T-cell (primary cell): ENCODE measurements at regions of chr1 and their contacts with region 1.

Region 1: GRCh38 chr1:156860113-156860627 is 495 bp upstream of the NTRK1 start:
- DNase-seq: peak in 31 of 35 experiments; percentile 17 to 73 (median 37)
- ATAC-seq: peak; percentile 69 to 74 (median 70)
- H3K4me3 ChIP-seq: peak overlapping the region; percentile 38 to 71
- H3K4me3 Mint-ChIP-seq: peak overlapping the region; percentile 69 to 90 (median 75)
- H3K27ac ChIP-seq: no peak overlapping the region
- H3K27ac Mint-ChIP-seq: no peak overlapping the region
- H3K4me1 ChIP-seq: peaks cover 5 to 30% of the 10 kb centered on the region in 2 experiments
- H3K4me1 Mint-ChIP-seq: peaks cover 18 to 32% (median 30%) of the 10 kb centered on the region in 3 donors
- H3K27me3 ChIP-seq: peaks cover 13 to 86% of the 10 kb centered on the region in 2 experiments
- H3K27me3 Mint-ChIP-seq: peaks cover 50 to 70% of the 10 kb centered on the region in 2 donors

Region 2: GRCh38 chr1:156689035-156689952 is 170.9 kb before region 1 on chr1:
- CTCF ChIA-PET with region 1: interaction called, 3 to 10 read pairs
- POLR2A ChIA-PET with region 1: no interaction called
- DNase-seq: peak; percentile 43 to 84 (median 70)
- ATAC-seq: peak; percentile 94 to 96 (median 96)
- H3K4me3 ChIP-seq: no peak overlapping the region
- H3K4me3 Mint-ChIP-seq: peak overlapping the region in 1 of 3 donors; percentile 25
- H3K27ac ChIP-seq: no peak overlapping the region
- H3K27ac Mint-ChIP-seq: peak overlapping the region in 1 of 2 donors; percentile 12
- H3K4me1 ChIP-seq: peaks cover 18 to 32% of the 10 kb centered on the region in 2 experiments
- H3K4me1 Mint-ChIP-seq: peaks cover 23 to 33% (median 26%) of the 10 kb centered on the region in 3 donors
- H3K27me3 ChIP-seq: peaks cover 5 to 84% of the 10 kb centered on the region in 2 experiments
- H3K27me3 Mint-ChIP-seq: peaks cover 41 to 61% of the 10 kb centered on the region in 2 donors

Region 3: DNA sequence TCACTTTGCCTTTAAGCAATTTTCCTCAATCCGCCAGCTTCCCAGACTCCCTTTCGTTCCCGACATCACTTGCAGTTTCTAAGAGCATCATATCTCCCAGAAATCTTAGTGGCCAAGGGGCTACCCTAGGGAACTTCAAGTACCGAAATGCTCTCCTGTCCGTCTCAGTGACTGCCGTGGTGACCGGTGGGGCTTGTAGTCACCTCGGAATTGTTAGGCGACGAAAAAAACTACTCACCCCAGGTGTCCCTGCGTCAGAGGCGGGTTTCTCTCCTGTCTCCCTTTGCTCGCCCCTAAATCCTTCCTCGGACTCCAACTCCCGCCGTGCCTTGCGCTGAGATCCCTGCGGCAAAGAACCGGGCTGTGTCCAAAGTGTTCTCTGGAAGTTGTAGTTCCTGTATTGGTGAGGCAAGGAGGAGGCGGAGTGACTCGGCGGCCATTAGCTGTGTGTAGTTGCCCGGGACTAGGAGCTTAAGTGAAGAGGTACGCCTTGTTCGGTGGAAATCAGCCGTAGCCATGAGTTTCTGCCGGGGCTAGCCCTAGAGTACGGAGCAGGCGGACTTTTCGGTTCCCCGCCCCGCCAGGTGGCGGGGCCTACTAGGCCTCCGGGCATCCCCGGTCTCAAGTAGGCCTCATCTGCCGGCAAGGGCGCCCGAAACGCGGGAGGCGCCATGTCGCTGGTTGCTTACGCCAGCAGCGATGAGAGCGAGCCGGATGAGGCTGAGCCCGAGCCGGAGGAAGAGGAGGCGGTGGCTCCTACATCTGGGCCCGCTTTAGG is 92.9 kb before region 1 on chr1 and contains the start of gene PRCC:
- CTCF ChIA-PET with region 1: interaction called in 1 of 2 experiments, 12 read pairs
- POLR2A ChIA-PET with region 1: no interaction called
- DNase-seq: peak; percentile 92 to 100 (median 99)
- ATAC-seq: peak; percentile 92 to 94 (median 93)
- H3K4me3 ChIP-seq: peak within 1 kb of the TSS; percentile 93 to 96
- H3K4me3 Mint-ChIP-seq: no peak within 1 kb of the TSS
- H3K27ac ChIP-seq: peak within 1 kb of the TSS; percentile 97
- H3K27ac Mint-ChIP-seq: no peak within 1 kb of the TSS
- H3K4me1 ChIP-seq: peaks cover 19 to 36% of the 10 kb centered on the region in 2 experiments
- H3K4me1 Mint-ChIP-seq: peaks cover 34 to 41% (median 39%) of the 10 kb centered on the region in 3 donors
- H3K27me3 ChIP-seq: no peaks in the 10 kb centered on the region
- H3K27me3 Mint-ChIP-seq: no peaks in the 10 kb centered on the region
- total RNA-seq, gene PRCC: 55.3 to 67.7 (median 65.4) TPM

Region 4: DNA sequence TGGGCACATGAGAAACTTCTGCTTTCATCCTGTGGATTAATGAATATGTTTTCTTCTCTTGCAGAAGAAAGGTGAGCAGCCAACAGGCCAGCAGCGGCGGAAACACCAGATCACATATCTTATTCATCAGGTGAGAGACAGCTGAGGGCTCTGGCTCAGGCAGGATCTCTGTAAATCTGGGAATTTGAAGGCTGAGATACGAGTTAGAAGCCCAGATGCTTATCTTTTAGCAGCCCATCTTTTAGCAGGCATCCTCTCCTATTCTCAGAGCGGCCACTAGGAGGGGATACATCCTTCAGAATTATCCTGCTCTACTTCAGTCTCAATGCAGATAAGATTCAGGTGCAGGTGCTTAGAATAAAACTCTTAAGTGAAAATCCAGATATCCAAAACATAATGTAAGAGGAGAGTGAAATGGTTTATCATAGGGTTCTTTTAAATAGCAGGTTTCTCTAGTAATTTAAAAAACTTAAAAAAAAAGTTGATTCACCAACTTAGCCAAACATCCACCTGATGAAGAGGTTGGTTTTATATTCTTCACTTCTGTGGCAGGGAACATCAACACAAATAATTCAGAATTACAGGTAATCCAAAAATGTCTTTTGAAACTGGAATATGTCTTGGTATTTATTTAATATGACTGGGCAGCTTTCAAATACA is 62.8 kb before region 1 on chr1:
- CTCF ChIA-PET with region 1: interaction called, 22 to 57 read pairs
- POLR2A ChIA-PET with region 1: interaction called in 1 of 2 experiments, 3 read pairs
- DNase-seq: peak in 34 of 35 experiments; percentile 15 to 84 (median 58)
- ATAC-seq: peak; percentile 71 to 85 (median 82)
- H3K4me3 ChIP-seq: no peak overlapping the region
- H3K4me3 Mint-ChIP-seq: no peak overlapping the region
- H3K27ac ChIP-seq: no peak overlapping the region
- H3K27ac Mint-ChIP-seq: no peak overlapping the region
- H3K4me1 ChIP-seq: peaks cover 0 to 10% of the 10 kb centered on the region in 2 experiments
- H3K4me1 Mint-ChIP-seq: peaks cover 14 to 20% (median 15%) of the 10 kb centered on the region in 3 donors
- H3K27me3 ChIP-seq: no peaks in the 10 kb centered on the region
- H3K27me3 Mint-ChIP-seq: no peaks in the 10 kb centered on the region

Region 5: DNA sequence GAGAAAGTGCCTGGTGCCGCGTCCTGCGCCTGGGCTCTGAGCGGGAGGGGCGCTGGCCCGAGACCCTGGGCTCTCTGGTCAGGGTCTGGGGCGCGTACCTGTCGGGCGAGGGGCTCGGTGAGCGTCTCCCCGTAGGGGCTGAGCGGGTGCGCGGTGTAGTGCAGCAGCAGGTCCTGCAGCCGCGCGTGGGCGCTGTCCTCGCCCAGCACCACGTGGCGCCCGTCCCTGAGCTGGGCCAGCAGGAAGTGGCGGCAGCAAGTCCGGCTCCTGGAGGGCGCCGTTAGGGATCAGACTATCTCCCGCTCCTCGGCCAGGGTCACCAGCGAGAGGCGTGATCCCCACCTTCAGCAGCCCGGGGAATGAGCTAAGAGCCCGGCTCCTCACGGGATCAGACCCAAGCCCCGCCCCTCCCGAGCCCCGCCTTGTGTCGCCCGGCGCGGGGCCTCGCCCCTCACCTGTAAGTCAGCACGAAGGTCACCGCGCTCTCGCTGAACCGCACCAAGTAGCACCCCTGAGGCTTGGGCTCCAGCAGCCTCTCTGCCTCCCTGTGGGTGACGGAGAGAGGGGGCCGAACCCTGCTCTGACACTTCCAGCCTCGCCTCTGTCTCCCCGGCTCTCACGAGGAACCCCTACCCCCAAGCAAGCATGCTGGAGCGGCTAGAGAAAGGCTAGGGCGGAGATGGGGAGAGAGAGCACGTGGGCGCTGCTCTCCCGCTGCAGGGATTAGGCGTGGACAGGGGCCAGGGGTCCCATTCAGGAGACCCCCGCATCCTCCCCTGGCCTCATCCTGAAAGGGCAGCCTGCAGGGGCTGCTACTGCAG is 46.2 kb before region 1 on chr1:
- CTCF ChIA-PET with region 1: interaction called, 3 to 12 read pairs
- POLR2A ChIA-PET with region 1: no interaction called
- DNase-seq: peak; percentile 41 to 85 (median 71)
- ATAC-seq: peak; percentile 46 to 53 (median 50)
- H3K4me3 ChIP-seq: peak overlapping the region; percentile 54 to 70
- H3K4me3 Mint-ChIP-seq: peak overlapping the region; percentile 88 to 92 (median 89)
- H3K27ac ChIP-seq: peak overlapping the region; percentile 99
- H3K27ac Mint-ChIP-seq: peak overlapping the region; percentile 98 to 100
- H3K4me1 ChIP-seq: peaks cover 25 to 79% of the 10 kb centered on the region in 2 experiments
- H3K4me1 Mint-ChIP-seq: peaks cover 57 to 77% (median 68%) of the 10 kb centered on the region in 3 donors
- H3K27me3 ChIP-seq: no peaks in the 10 kb centered on the region
- H3K27me3 Mint-ChIP-seq: no peaks in the 10 kb centered on the region

Region 6: DNA sequence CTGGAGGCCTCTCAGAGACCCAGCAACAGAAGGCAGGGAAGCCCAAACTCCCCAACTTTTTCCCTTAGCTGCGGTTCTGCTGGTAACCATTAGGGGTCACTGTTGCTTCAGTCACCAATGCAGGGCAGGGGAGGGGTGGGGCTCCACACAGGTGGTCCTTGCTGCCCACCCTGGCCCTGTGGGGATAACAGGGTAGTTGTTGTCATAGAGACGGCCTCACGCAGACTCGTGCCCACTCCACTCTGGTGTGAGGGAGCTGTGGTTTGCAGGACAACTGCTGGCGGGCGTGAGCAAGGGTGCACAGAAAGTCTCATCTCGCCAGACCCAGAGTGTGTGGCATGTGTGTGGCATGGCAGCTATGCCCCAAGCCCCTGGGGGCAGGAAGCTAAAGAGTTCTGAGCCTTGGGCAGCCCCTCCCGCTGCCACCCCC is 21.2 kb before region 1 on chr1:
- CTCF ChIA-PET with region 1: interaction called, 26 to 27 read pairs
- POLR2A ChIA-PET with region 1: no interaction called
- DNase-seq: peak in 23 of 35 experiments; percentile 18 to 73 (median 40)
- ATAC-seq: peak; percentile 62 to 67 (median 64)
- H3K4me3 ChIP-seq: no peak overlapping the region
- H3K4me3 Mint-ChIP-seq: no peak overlapping the region
- H3K27ac ChIP-seq: no peak overlapping the region
- H3K27ac Mint-ChIP-seq: no peak overlapping the region
- H3K4me1 ChIP-seq: peaks cover 0 to 16% of the 10 kb centered on the region in 2 experiments
- H3K4me1 Mint-ChIP-seq: peaks cover 14 to 20% (median 17%) of the 10 kb centered on the region in 3 donors
- H3K27me3 ChIP-seq: peaks cover 0 to 75% of the 10 kb centered on the region in 2 experiments
- H3K27me3 Mint-ChIP-seq: peaks cover 41 to 50% of the 10 kb centered on the region in 2 donors